Activated CD4-positive, alpha-beta T cell treated with anti-CD3 and anti-CD28 coated beads, Interleukin-2, amount 10 ng/mL, durations not matched to agents 24 days and 14 days (primary cell): ENCODE measurements at regions of chr20 and their contacts with region 1.

Region 1: DNA sequence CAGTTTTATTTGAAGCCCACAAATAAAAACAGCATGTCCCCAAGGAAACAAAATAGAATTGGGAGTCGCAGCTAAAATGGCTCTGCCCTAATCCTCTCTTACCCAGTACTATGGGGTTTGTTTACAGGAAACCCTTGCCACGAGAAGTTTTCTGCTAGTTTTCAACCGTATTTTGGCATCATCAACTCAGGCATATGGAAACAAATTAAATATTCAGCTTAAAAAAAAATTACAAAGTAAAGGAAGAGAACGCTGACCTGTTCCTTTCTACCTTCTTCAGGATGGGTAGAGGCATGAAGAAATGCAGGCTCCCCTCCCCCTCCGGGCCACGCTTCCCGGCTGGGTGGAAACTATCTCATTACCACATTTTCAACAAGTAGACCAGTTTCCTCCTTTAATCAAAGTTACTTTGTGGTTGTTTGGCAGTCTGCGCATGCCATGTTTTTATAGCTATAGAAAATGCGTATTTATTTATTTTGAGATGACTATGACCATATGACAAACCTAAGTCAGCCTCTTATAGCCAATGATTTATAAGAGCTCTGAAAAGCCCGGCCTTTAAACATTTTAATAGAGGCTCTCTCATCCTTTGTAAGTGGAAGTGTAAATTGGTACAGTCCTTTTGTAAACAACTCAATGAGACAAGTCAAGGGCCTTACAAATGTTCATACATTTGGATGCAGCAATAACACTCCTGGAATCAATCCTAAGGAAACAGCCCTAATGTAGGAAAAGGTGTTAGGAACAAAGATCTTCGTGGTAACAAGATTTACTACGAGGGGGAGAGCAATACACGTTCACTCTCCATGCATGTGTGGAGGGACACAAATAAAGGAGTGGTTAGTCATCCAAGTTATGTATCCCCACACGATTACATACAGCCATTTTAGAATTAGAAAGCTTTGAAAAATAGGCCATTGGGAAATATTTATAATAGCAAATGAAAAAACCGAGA is 16.1 kb upstream of the ZNF217 start:
- DNase-seq: peak; percentile 93
- H3K4me3 Mint-ChIP-seq: peak overlapping the region; percentile 83
- H3K27ac Mint-ChIP-seq: peak overlapping the region; percentile 97
- H3K4me1 Mint-ChIP-seq: peaks cover 27% of the 10 kb centered on the region
- H3K27me3 Mint-ChIP-seq: no peaks in the 10 kb centered on the region

Region 2: DNA sequence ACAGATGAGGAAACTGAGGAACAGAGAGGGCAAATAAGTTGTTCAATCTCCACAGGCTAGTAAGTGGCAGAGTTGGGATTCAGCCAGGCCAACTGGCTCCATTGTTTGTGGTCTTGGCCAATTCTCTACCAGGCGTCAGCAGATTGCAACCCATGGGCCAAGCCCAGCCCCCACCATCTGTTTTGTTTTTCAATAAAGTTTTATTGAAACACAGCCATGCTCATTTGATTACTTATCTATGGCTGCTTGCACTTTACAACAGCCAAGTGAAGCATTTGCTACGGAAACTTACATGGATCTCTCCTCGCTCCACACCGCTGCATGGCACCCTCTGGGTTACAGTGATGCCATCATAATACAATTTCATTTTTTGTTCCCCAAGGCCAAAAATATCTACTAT is 106.9 kb before region 1 on chr20:
- intact Hi-C with region 1: no loop called
- DNase-seq: no peak
- H3K4me3 Mint-ChIP-seq: no peak overlapping the region
- H3K27ac Mint-ChIP-seq: no peak overlapping the region
- H3K4me1 Mint-ChIP-seq: no peaks in the 10 kb centered on the region
- H3K27me3 Mint-ChIP-seq: no peaks in the 10 kb centered on the region

Region 3: GRCh38 chr20:53594068-53595017 is 15.4 kb before region 1 on chr20:
- intact Hi-C with region 1: loop called (anchors 2 kb)
- DNase-seq: peak; percentile 99
- H3K4me3 Mint-ChIP-seq: peak overlapping the region; percentile 86
- H3K27ac Mint-ChIP-seq: peak overlapping the region; percentile 93
- H3K4me1 Mint-ChIP-seq: peaks cover 45% of the 10 kb centered on the region
- H3K27me3 Mint-ChIP-seq: no peaks in the 10 kb centered on the region

Region 4: DNA sequence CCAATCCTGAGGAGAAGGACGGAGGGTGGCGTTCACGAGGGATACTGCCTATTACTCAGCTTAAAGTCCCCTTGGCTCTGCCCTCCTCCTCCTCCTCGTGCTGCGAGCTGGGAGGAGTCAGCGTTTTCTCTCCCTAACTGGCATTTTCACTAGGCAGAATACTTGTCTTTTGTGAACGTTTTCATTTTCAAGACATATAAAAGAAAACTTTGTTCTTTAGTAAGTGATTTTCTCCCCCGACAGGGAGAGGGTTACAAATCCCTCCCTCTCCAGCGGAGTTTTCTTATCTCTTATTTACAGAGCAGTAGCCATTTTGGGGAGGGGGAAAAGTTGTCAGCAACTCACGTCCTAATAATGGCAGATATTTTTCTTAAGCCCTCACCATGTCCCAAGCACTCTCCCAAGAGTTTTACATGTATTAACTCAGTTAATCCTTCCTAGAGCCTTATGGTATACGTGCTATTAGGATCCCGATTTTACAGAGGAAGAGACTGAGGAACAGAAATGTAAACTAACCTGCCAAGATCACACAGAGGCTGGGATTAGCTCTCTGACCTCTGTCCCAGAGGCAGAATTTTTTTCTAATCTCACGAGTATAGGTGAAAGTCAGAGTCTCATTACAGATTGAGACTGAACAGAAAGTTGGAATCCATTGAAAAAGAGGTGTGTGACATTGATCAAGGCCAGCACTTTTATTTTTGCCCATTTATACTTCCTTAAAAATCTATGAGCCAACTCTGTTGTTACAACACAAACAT is 13.9 kb after region 1 on chr20:
- intact Hi-C with region 1: loop called (anchors 1 kb)
- DNase-seq: peak; percentile 81
- H3K4me3 Mint-ChIP-seq: peak overlapping the region; percentile 81
- H3K27ac Mint-ChIP-seq: peak overlapping the region; percentile 98
- H3K4me1 Mint-ChIP-seq: peaks cover 36% of the 10 kb centered on the region
- H3K27me3 Mint-ChIP-seq: no peaks in the 10 kb centered on the region

Region 5: DNA sequence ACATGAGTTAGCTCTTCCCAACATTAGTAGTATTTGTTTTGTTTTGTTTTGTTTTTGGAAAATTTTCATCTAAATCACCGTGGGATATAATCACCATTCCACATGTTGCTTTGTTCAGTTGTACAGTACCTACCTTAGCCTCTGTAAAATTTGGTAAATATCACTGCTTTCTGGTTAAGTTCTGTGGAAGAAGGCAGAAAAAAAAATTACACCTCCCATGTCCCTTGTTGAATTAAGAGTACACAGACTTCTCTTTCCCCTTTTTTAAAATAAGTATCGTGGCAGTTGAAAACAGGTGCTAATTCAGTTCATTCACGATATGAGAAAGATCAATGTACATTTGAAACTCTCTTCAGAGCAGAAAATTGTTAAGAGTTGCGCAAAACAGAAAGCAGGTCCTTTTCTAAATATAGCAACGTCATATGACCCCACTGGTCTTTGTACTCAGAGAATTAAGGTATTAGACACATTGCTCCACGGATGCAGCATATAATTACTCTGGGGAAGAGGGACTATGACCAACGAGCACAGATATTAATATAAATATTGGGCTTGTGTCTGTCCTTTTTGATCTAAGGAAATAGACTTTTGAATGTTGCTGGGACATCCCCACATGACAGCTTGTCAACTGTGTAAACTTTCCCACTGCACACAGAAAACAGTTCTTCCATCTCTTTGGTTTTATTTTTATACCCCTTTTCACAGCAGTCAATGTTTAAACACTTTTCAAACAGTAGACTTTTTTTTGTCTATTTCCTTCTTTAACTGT is 42.5 kb after region 1 on chr20:
- intact Hi-C with region 1: loop called (anchors 2 kb)
- DNase-seq: peak; percentile 76
- H3K4me3 Mint-ChIP-seq: peak overlapping the region; percentile 87
- H3K27ac Mint-ChIP-seq: peak overlapping the region; percentile 99
- H3K4me1 Mint-ChIP-seq: peaks cover 40% of the 10 kb centered on the region
- H3K27me3 Mint-ChIP-seq: no peaks in the 10 kb centered on the region

Region 6: GRCh38 chr20:53738039-53738944 is 128.5 kb after region 1 on chr20:
- intact Hi-C with region 1: no loop called
- DNase-seq: no peak
- H3K4me3 Mint-ChIP-seq: no peak overlapping the region
- H3K27ac Mint-ChIP-seq: peak overlapping the region; percentile 92
- H3K4me1 Mint-ChIP-seq: peaks cover 51% of the 10 kb centered on the region
- H3K27me3 Mint-ChIP-seq: no peaks in the 10 kb centered on the region